HepG2 (cell line): ENCODE measurements at regions of chr2 and their contacts with region 1.

Region 1: GRCh38 chr2:16365366-16365765 is 300.3 kb downstream of the CYRIA start:
- DNase-seq: no peak
- ATAC-seq: no peak
- H3K4me3 ChIP-seq: no peak overlapping the region
- H3K27ac ChIP-seq: no peak overlapping the region
- H3K4me1 ChIP-seq: no peaks in the 10 kb centered on the region
- H3K27me3 ChIP-seq: no peaks in the 10 kb centered on the region; a peak in 1 of 5 replicates
- CTCF ChIP-seq: no peak
- EP300 ChIP-seq: no peak
- POLR2A ChIP-seq: no peak
- RAD21 ChIP-seq: no peak

Region 2: DNA sequence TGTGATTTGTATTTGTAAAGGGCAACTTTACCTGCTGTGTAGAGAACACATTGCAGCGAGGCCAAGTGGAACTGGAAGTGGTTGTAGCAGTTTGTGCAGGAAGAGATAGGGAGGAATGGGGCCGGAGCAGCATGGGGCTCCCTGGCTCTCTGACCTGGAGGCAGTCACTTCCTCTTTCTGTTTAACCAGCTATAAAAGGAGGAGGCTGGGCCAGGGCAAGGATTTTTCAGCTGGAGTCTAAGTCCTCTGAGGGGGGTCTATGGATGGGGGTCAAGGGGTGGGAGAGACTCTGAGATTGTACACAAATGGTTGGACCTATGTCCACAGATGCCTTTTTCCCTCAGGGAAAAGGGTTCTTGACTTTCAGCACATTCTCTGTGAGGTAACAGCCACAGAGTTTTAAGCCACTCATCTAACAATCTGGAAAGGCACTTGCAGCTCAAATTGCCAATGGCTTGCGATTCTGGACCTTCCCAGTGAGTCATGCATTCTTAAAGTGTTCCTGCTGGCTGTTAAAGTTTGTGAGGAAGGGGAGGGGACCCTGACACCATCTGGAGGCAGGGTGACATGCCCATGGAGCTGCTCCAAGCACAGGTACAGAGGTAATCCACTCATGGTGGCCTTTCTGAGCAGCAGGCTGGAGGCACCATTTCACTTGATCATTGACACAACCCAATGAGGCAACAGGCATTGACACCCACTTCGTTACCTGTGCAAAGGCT is 46.7 kb before region 1 on chr2:
- CTCF ChIA-PET with region 1: no interaction called
- POLR2A ChIA-PET with region 1: no interaction called
- in situ Hi-C with region 1: no loop called
- intact Hi-C with region 1: loop called (anchors 1 kb)
- DNase-seq: no peak
- ATAC-seq: no peak
- H3K4me3 ChIP-seq: no peak overlapping the region
- H3K27ac ChIP-seq: no peak overlapping the region
- H3K4me1 ChIP-seq: no peaks in the 10 kb centered on the region
- H3K27me3 ChIP-seq: no peaks in the 10 kb centered on the region
- CTCF ChIP-seq: no peak
- EP300 ChIP-seq: no peak
- POLR2A ChIP-seq: no peak
- RAD21 ChIP-seq: no peak

Region 3: GRCh38 chr2:17479875-17480274 is 1114.5 kb after region 1 on chr2:
- CTCF ChIA-PET with region 1: no interaction called
- POLR2A ChIA-PET with region 1: no interaction called
- in situ Hi-C with region 1: no loop called
- intact Hi-C with region 1: no loop called
- DNase-seq: peak; percentile 96
- ATAC-seq: peak; percentile 99
- H3K4me3 ChIP-seq: peak overlapping the region in 1 of 3 experiments; percentile 34; a peak in 1 of 6 replicates
- H3K27ac ChIP-seq: peak overlapping the region; percentile 61
- H3K4me1 ChIP-seq: peaks cover 47% of the 10 kb centered on the region
- H3K27me3 ChIP-seq: no peaks in the 10 kb centered on the region
- CTCF ChIP-seq: no peak
- EP300 ChIP-seq: peak in 1 of 2 experiments; percentile 95; a peak in 2 of 4 replicates
- POLR2A ChIP-seq: no peak
- RAD21 ChIP-seq: no peak